ENCODE measurements at regions of chr22 and their contacts with region 1.

Region 1: DNA sequence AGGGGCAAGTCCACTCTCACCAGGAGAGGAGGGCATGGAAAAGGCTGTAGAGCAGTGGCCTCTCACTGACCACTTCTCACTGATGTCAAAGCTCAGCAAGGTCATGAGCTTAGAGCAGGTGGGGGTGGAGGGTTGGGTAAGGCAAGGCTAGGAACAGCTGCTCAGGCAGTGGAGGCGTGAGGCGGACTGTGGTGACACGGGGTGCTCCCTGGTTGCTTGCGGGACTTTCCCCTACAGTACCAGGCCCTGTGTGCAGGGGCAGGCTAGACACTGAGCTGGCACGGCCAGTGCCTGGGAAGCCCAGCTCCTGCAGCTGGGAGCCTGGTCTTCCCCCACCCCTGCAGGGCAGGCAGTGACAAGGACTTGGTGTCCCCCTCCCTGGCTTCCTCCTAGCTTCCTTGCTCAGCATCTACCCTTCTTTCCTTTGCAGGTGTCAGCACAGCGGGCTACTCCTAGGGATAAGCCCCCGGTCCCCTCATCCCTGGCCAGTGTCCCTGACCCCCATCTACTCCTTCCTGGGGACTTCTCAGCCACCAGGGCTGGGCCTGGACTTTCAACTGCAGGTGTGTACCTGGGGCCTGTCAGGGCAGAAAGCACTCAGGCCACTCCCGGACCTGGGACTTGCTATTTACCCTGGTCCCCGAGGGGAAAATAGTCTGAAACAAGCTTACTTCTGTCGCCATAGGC is 45.6 kb downstream of the PISD start:
- DNase-seq: peak; percentile 85
- H3K4me3 ChIP-seq: no peak overlapping the region
- H3K27ac ChIP-seq: peak overlapping the region; percentile 13 to 79 (median 52)
- H3K4me1 ChIP-seq: peaks cover 28 to 67% (median 46%) of the 10 kb centered on the region in 6 donors
- H3K27me3 ChIP-seq: no peaks in the 10 kb centered on the region
- CTCF ChIP-seq: no peak
- POLR2A ChIP-seq: no peak

Region 2: GRCh38 chr22:31574055-31574670 is 42.3 kb before region 1 on chr22:
- intact Hi-C with region 1: loop called (anchors 5 kb)
- DNase-seq: no peak
- H3K4me3 ChIP-seq: no peak overlapping the region
- H3K27ac ChIP-seq: no peak overlapping the region
- H3K4me1 ChIP-seq: peaks cover 0 to 3% (median 0%) of the 10 kb centered on the region in 6 donors
- H3K27me3 ChIP-seq: no peaks in the 10 kb centered on the region
- CTCF ChIP-seq: no peak
- POLR2A ChIP-seq: no peak

Region 3: GRCh38 chr22:31680861-31681341 is 64.4 kb after region 1 on chr22:
- intact Hi-C with region 1: no loop called
- DNase-seq: no peak
- H3K4me3 ChIP-seq: no peak overlapping the region
- H3K27ac ChIP-seq: peak overlapping the region in 3 of 8 donors; percentile 2 to 35 (median 29)
- H3K4me1 ChIP-seq: peaks cover 0 to 21% (median 10%) of the 10 kb centered on the region in 6 donors
- H3K27me3 ChIP-seq: no peaks in the 10 kb centered on the region
- CTCF ChIP-seq: no peak
- POLR2A ChIP-seq: no peak

Measured in spleen (tissue), 13 donors.